ENCODE measurements at regions of chr1 and their contacts with region 1.

Region 1: DNA sequence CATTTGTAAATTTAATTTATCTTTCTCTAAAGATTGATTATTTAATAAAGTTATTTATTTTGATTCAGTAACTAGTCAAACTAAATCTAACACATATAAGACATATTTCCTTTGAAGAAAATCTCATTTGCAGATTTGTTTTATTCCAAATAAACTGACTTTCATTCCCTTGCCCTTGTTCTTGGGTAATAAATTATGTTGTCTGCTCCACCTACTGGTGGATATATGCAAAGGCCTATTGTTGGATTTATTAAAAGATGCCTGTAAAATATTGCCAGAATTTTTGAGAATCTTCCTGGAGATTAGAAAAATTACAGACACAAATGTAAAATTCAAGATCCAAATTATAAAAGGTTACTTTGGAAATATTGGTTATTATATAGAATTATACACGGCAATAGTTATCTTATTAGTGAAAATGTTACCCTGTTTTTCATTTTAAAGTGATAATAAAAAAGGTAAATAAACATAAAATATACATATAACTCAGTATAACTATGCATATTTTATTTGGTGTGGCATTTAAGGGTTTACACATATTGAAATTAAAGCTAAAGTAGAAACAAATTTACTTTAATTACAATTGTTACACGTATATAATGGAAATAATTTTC is 116.1 kb downstream of the SPATA17 start:
- DNase-seq: no peak
- ATAC-seq: no peak
- H3K4me3 Mint-ChIP-seq: no peak overlapping the region
- H3K27ac Mint-ChIP-seq: no peak overlapping the region
- H3K4me1 Mint-ChIP-seq: no peaks in the 10 kb centered on the region
- H3K27me3 Mint-ChIP-seq: no peaks in the 10 kb centered on the region
- CTCF ChIP-seq: peak; percentile 25

Region 2: GRCh38 chr1:216310776-216311175 is 1436.5 kb before region 1 on chr1:
- CTCF ChIA-PET with region 1: no interaction called
- POLR2A ChIA-PET with region 1: no interaction called
- intact Hi-C with region 1: loop called (anchors 5 kb)
- DNase-seq: no peak
- ATAC-seq: no peak
- H3K4me3 Mint-ChIP-seq: no peak overlapping the region
- H3K27ac Mint-ChIP-seq: no peak overlapping the region
- H3K4me1 Mint-ChIP-seq: no peaks in the 10 kb centered on the region
- H3K27me3 Mint-ChIP-seq: no peaks in the 10 kb centered on the region
- CTCF ChIP-seq: no peak

Region 3: DNA sequence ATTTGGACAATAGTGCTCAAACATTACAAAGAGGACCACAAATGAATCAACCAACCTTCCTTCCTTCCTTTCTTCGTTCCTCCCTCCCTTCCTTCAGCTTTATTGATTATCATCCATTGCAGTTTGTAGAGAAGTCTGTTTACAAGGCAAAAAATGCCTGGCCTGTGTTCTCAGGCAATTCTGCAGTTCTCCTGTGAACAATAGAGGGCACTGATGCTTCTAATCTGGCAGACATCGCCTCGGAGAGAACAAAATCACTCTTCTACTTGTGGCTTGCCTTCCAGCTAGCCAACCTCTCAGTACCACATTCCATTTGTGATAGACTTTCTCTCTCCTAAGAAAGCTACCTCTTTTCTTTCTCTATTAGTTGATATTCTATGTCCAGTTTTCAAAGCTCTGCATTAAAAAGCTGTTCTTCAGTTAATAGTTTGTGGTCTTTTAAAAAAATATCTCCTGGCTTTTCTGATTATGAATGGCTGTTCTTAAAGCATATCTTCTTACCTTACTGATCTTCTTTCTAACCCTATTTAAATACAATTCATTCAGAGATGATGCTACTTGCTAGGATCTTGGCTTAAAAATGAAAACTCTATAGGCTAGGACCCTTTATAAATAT is 997.1 kb before region 1 on chr1:
- CTCF ChIA-PET with region 1: no interaction called
- POLR2A ChIA-PET with region 1: no interaction called
- intact Hi-C with region 1: loop called (anchors 2 kb)
- DNase-seq: no peak
- ATAC-seq: no peak
- H3K4me3 Mint-ChIP-seq: no peak overlapping the region
- H3K27ac Mint-ChIP-seq: no peak overlapping the region
- H3K4me1 Mint-ChIP-seq: no peaks in the 10 kb centered on the region
- H3K27me3 Mint-ChIP-seq: no peaks in the 10 kb centered on the region
- CTCF ChIP-seq: no peak

Region 4: GRCh38 chr1:216761640-216762039 is 985.6 kb before region 1 on chr1:
- CTCF ChIA-PET with region 1: no interaction called
- POLR2A ChIA-PET with region 1: no interaction called
- intact Hi-C with region 1: no loop called
- DNase-seq: no peak
- ATAC-seq: no peak
- H3K4me3 Mint-ChIP-seq: no peak overlapping the region
- H3K27ac Mint-ChIP-seq: no peak overlapping the region
- H3K4me1 Mint-ChIP-seq: no peaks in the 10 kb centered on the region
- H3K27me3 Mint-ChIP-seq: no peaks in the 10 kb centered on the region
- CTCF ChIP-seq: no peak

Region 5: DNA sequence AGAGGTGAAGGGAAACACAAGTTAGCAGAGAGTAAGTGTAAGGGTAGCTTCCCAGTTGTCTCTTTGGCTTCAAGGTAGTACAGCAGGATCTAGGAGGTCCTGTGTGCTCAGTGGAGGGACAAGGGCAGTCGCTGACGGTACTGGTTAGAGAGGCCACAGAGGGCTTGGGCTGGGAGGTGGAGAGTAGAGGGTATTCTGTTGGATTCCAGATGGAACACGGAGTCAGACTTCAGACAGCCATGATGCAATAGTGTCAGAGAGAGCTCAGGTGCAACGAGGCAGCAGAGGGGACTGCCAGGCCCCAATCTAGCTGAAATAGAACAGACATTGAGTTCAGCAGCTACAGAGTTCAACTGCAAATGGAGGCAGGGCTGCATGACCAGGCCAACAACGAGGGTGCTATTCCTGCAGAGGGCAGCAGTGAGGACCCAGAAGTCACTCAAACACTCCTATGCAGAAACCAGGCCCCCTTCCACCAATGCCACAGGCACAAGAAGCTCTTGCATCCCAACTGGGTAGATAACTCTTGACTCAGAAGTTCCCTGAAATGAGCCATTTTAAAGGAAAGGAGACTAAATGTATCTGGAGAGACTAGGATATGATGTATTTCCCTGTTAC is 699.0 kb before region 1 on chr1:
- CTCF ChIA-PET with region 1: no interaction called
- POLR2A ChIA-PET with region 1: no interaction called
- intact Hi-C with region 1: loop called (anchors 2 kb)
- DNase-seq: no peak
- ATAC-seq: no peak
- H3K4me3 Mint-ChIP-seq: no peak overlapping the region
- H3K27ac Mint-ChIP-seq: no peak overlapping the region
- H3K4me1 Mint-ChIP-seq: no peaks in the 10 kb centered on the region
- H3K27me3 Mint-ChIP-seq: no peaks in the 10 kb centered on the region
- CTCF ChIP-seq: no peak

Region 6: DNA sequence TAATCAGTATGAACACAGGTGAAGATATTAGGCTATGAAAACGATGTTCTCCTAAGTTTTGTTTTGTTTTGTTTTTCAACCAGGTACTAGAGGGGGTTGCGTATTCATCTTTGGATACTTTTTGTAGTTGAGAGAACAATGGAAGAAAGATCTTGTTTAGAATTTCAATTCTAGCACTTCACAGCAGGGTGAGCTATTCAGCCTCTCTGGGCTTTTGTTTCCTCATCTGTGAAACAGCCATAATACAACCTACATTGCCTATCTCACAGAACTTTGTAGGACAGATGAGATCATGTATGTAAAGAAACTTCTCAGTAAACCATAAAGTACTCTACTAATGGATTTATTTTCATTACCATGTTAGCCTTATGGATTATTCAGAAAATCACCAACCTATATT is 315.9 kb before region 1 on chr1:
- CTCF ChIA-PET with region 1: no interaction called
- POLR2A ChIA-PET with region 1: no interaction called
- intact Hi-C with region 1: loop called (anchors 10 kb)
- DNase-seq: no peak
- ATAC-seq: no peak
- H3K4me3 Mint-ChIP-seq: no peak overlapping the region
- H3K27ac Mint-ChIP-seq: no peak overlapping the region
- H3K4me1 Mint-ChIP-seq: no peaks in the 10 kb centered on the region
- H3K27me3 Mint-ChIP-seq: no peaks in the 10 kb centered on the region
- CTCF ChIP-seq: no peak

Region 7: GRCh38 chr1:217889401-217889800 is 142.1 kb after region 1 on chr1:
- CTCF ChIA-PET with region 1: no interaction called
- POLR2A ChIA-PET with region 1: no interaction called
- intact Hi-C with region 1: no loop called
- DNase-seq: no peak
- ATAC-seq: no peak
- H3K4me3 Mint-ChIP-seq: no peak overlapping the region
- H3K27ac Mint-ChIP-seq: no peak overlapping the region
- H3K4me1 Mint-ChIP-seq: no peaks in the 10 kb centered on the region
- H3K27me3 Mint-ChIP-seq: no peaks in the 10 kb centered on the region
- CTCF ChIP-seq: no peak